GM23248 (cell line): ENCODE measurements at regions of chr11 and their contacts with region 1.

Region 1: GRCh38 chr11:13962562-13963168 is at the start of gene SPON1:
- DNase-seq: peak; percentile 53
- H3K4me3 ChIP-seq: peak within 1 kb of the TSS; percentile 34; the same call in 1 of the 2 replicates
- H3K27ac ChIP-seq: no peak within 1 kb of the TSS
- H3K4me1 ChIP-seq: no peaks in the 10 kb centered on the region
- H3K27me3 ChIP-seq: peaks cover 82% of the 10 kb centered on the region
- total RNA-seq, gene SPON1: 2.4 and 3.7 TPM in 2 replicates

Region 2: DNA sequence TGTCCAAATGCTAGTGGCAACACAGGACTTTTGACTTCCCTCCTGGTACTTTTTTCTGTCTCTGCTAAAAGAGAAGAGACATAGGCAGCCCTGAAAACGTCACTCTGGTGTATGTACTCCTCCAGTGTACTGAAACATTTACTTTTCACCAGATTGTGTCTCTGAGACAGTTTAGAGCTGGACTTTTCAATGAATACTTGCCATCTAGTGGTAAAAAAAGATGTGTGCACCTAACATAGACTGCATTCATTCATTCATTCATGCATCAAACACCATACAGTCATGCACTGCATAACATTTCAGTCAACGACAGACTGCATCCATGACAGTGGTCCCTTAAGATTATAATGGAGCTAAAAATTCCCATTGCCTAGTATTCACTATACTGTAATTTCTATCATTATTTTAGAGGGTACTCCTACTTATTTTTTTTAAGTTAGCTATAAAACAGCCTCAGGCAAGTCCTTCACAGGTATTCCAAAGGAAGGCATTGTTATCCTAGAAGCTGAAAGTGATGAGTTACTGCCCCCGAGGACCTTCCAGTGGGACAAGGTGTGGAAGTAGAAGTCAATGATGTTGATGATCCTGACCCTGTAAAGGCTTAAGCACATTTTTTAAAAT is 186.1 kb after region 1 on chr11:
- in situ Hi-C with region 1: loop called (anchors 10 kb)
- DNase-seq: peak; percentile 67
- H3K4me3 ChIP-seq: no peak overlapping the region
- H3K27ac ChIP-seq: no peak overlapping the region
- H3K4me1 ChIP-seq: no peaks in the 10 kb centered on the region
- H3K27me3 ChIP-seq: 0 out of 2 replicates have a peak, but pooled peaks cover 6% of the 10 kb centered on the region

Region 3: GRCh38 chr11:14249121-14249963 is 286.7 kb after region 1 on chr11:
- in situ Hi-C with region 1: loop called (anchors 5 kb)
- DNase-seq: peak; percentile 72
- H3K4me3 ChIP-seq: no peak overlapping the region
- H3K27ac ChIP-seq: no peak overlapping the region
- H3K4me1 ChIP-seq: no peaks in the 10 kb centered on the region
- H3K27me3 ChIP-seq: peaks cover 4% of the 10 kb centered on the region; the same call in 1 of the 2 replicates